Left colon (tissue), 2 donors: ENCODE measurements at regions of chr3 and their contacts with region 1.

Region 1: GRCh38 chr3:49359623-49360022 is 1.5 kb upstream of the GPX1 start:
- DNase-seq: no peak
- ATAC-seq: no peak

Region 2: DNA sequence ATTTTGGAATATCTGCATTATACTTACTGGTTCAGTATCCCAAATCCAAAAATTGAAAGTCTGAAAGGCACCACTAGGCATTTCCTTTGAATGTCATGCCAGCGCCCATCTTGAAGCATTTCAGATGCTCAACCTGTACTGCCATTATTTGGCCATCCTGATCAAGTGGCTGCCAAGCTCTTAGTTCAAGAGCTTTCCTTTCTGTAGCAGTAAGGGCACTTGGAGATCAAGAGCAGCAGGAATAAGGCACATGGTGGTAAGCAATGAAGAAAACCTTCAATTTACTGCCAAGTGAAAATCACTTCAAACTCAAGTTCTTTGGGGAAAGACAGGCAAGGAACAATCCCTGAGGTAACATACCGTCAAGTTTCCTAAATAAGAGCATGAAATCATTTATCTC is 42.1 kb after region 1 on chr3:
- intact Hi-C with region 1: loop called in 1 of 2 experiments (anchors 5 kb)
- DNase-seq: no peak
- ATAC-seq: no peak